ENCODE measurements at regions of chr16 and their contacts with region 1.

Region 1: DNA sequence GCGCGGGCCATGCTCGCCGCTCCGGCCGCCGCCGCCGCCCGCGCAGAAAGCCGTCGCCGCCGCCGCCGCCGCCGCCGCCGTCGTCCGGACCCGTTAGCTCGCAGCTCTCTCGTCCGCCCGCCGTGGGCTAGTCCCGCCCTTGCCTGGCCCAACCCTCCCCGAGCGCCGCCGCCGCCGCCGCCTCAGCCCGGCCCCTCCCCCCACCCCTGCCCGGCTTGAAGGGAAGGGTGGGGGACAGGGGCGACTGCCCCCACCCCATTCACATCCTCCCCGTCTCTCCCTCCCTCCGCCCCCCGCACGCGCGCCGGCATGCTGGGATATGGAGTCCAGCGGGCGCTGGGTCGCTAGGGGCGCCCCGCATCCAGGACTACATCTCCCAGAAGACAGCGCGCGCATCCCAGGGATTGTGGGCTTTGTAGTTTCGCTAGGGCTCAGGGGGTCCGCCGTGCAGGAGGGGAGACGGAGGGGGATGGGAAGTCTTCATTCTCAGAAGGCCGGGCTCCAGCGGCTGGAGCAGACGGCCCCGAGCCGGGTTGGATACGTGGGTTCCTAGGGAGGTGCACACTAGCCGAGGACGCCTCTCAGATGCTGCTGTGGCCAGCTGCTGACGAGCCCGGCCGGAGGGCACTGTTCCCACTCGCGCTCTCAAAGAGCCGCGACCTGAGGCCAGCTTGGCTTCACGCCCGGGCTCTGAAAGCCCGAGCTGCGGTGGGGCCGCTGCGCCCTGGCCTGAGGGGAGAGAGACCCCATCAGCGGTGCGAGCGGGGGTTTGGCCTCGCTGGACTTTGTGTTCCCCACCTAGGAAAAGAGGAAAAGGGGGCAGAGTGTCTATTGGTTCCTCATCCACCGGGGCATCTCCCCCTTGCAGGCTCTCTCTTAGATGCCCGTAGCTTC is at the start of gene ST3GAL2:
- DNase-seq: peak; percentile 84
- ATAC-seq: peak; percentile 93
- H3K4me3 ChIP-seq: peak within 1 kb of the TSS; percentile 85
- H3K27ac ChIP-seq: no peak within 1 kb of the TSS
- H3K4me1 ChIP-seq: peaks cover 15% of the 10 kb centered on the region
- H3K27me3 ChIP-seq: no peaks in the 10 kb centered on the region
- CTCF ChIP-seq: no peak
- total RNA-seq, gene ST3GAL2: 9.3 and 9.8 TPM in 2 replicates

Region 2: GRCh38 chr16:70331588-70332358 is 107.4 kb before region 1 on chr16:
- CTCF ChIA-PET with region 1: no interaction called
- POLR2A ChIA-PET with region 1: no interaction called
- intact Hi-C with region 1: no loop called
- DNase-seq: peak; percentile 31
- ATAC-seq: peak; percentile 48
- H3K4me3 ChIP-seq: no peak overlapping the region
- H3K27ac ChIP-seq: no peak overlapping the region
- H3K4me1 ChIP-seq: no peaks in the 10 kb centered on the region
- H3K27me3 ChIP-seq: no peaks in the 10 kb centered on the region
- CTCF ChIP-seq: peak; percentile 58

Region 3: DNA sequence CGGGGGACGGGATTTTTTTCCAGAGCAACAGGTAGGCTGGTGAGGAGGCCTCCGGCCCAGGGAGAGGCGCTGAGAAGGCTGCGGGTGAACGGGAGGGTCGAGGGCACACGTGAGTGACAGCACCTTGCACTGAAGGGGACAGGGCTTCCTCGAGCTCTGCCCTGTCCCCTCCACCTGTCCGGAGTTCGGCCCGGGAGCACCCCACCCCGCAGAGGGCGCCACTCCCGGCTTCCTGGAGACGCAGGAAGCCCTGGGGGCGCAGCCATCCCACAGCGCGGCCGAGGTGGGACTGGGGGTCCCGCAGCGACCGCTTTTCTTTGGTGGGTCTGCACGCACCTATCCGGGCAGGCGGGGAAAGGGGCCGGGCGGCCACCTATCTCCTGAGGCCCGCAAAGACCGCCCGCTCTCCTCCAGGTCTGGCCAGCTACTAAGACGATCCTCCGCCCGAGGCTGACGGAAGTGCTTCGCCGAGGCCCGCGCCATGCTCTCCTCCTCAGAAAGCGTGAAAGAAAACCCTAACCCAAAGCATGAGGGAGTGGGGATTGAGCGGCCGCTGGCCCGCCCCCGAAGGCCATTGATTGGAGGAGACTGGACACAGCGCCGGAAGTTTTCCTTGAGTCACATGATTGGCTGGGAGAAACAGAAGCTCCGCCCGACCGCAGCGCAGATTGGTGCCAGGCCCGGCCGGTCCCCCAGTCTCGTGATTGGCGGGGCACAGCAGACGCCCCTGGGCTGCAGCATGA is 58.2 kb before region 1 on chr16:
- CTCF ChIA-PET with region 1: no interaction called
- POLR2A ChIA-PET with region 1: no interaction called
- intact Hi-C with region 1: loop called (anchors 2 kb)
- DNase-seq: peak; percentile 94
- ATAC-seq: peak; percentile 89
- H3K4me3 ChIP-seq: peak overlapping the region; percentile 94
- H3K27ac ChIP-seq: peak overlapping the region; percentile 88
- H3K4me1 ChIP-seq: peaks cover 7% of the 10 kb centered on the region; the same call in 1 of the 2 replicates
- H3K27me3 ChIP-seq: no peaks in the 10 kb centered on the region
- CTCF ChIP-seq: peak; percentile 42